AG04449 (cell line): ENCODE measurements at regions of chr3 and their contacts with region 1.

Region 1: GRCh38 chr3:142828703-142829305 is 60.1 kb downstream of the PCOLCE2 start:
- DNase-seq: peak; percentile 10
- H3K4me3 ChIP-seq: no peak overlapping the region
- CTCF ChIP-seq: peak; percentile 92

Region 2: GRCh38 chr3:142586803-142587406 is 241.9 kb before region 1 on chr3:
- CTCF ChIA-PET with region 1: interaction called, 23 read pairs
- POLR2A ChIA-PET with region 1: no interaction called
- DNase-seq: no peak
- H3K4me3 ChIP-seq: no peak overlapping the region
- CTCF ChIP-seq: peak; percentile 50

Region 3: GRCh38 chr3:142817897-142818296 is 10.9 kb before region 1 on chr3:
- CTCF ChIA-PET with region 1: interaction called, 70 read pairs
- POLR2A ChIA-PET with region 1: no interaction called
- DNase-seq: no peak
- H3K4me3 ChIP-seq: no peak overlapping the region
- CTCF ChIP-seq: no peak

Region 4: DNA sequence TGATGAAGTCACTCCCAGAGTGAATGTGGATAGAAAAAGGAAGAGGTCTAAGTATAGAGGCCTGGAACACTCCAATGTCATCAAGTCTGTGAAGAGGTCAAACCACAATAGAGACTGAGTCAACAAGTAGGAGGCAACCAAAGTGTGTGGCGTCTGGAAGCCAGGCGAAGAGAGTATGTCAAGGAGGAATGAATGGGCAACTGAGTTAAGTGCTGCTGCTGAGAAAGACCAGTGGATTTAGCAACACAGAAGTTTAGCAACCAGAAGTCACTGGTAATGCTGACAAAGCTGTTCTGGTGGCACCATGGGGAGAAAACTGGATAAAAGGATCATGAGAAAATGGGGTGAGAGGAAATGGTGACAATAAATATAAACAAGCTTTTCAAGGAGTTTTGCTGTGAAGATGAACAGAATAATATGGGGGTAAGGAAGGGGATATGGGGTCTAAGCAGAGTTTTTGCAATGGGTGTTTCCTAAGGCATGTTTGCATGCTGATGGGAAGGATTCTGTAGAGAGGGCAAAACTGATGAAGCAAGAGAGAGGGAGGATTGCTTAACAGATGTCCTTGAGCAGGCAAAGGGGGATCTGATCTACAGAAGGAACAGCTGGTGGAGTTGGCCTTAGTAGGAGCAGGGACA is 21.7 kb after region 1 on chr3:
- CTCF ChIA-PET with region 1: interaction called, 49 read pairs
- POLR2A ChIA-PET with region 1: no interaction called
- DNase-seq: peak; percentile 77
- H3K4me3 ChIP-seq: no peak overlapping the region
- CTCF ChIP-seq: no peak

Region 5: DNA sequence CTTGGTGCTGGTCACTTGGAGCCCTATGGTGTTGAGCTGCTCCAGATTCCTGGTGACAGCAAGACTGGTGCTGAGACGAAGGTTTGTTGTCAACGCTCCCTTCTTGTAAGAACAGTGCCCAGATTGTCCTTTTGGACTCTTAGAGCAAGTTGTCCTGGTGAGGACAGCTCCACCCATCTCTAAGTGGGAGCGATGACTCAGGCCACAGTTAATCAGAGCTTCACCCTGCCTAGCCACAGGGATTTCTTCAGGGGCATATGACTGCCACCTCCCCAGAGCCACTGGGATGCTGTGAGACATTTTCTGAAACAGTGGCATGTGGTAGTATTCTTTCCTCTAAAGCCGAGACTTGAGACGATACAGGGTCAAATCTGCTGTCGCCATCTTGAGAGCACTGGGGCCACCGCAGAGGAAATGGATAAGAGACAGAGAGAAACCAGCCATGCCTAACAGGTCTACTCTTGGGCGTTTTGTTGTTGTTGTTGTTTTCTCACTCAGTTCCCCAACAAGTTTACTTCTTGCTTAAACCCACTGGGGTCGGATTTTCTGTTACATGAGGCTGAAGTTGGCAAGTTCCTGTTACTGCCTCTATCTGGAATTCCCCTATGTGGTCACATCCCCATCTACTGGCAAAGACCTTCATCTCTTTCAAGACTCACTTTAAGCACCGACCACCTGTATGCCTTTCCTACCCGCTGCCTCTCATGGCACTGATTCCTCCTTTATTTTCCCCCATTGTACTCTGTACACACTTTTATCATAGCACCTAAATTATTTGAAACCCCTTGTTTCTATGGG is 76.0 kb after region 1 on chr3:
- CTCF ChIA-PET with region 1: interaction called, 18 read pairs
- POLR2A ChIA-PET with region 1: no interaction called
- DNase-seq: no peak
- H3K4me3 ChIP-seq: no peak overlapping the region
- CTCF ChIP-seq: no peak

Region 6: DNA sequence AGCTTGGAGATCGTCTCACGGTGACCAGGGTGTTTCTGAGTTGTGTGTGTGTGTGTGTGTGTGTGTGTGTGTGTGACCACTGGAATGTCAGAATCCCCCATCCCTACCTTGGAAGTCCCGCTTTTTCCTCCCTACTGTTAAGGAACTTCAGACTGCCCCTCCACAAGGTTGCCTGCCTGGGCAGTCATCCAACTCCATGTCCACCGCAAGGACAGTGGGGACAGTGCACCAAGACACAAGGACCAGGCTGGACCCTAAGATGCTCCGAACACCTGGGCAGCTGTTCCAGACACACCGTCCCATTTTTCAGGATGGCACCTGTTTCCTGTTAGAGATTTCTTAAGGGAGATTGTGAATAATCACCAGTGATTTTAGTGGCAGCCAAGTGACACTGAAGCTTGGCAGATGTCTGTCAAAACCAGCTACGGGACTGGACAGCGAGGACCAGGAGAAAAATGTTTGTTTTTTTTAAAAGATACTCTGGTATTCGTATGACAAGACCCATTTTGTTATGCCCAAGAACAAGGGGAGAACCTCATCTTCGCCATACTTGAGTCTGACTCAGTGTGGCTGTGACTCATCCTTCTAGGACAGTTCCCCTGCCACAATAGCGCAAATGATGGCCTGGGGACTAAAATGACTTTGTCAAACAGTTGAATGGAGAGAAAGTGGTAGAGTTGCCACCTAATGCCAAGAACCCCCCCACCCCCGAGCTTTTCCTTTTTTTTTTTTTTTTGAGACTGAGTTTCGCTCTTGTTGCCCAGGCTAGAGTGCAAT is 119.2 kb after region 1 on chr3:
- CTCF ChIA-PET with region 1: interaction called, 19 read pairs
- POLR2A ChIA-PET with region 1: no interaction called
- DNase-seq: no peak
- H3K4me3 ChIP-seq: no peak overlapping the region
- CTCF ChIP-seq: no peak

Region 7: GRCh38 chr3:142976621-142977398 is 148.0 kb after region 1 on chr3:
- CTCF ChIA-PET with region 1: interaction called, 135 read pairs
- POLR2A ChIA-PET with region 1: no interaction called
- DNase-seq: peak; percentile 75
- H3K4me3 ChIP-seq: no peak overlapping the region
- CTCF ChIP-seq: no peak